Activated naive CD4-positive, alpha-beta T cell treated with anti-CD3 and anti-CD28 coated beads for 36 hours (primary cell): ENCODE measurements at regions of chr12 and their contacts with region 1.

Region 1: GRCh38 chr12:6807170-6807569 is 14.5 kb upstream of the GPR162 start:
- DNase-seq: no peak
- H3K4me3 Mint-ChIP-seq: no peak overlapping the region
- H3K27ac Mint-ChIP-seq: no peak overlapping the region
- H3K4me1 Mint-ChIP-seq: peaks cover 19% of the 10 kb centered on the region
- H3K27me3 Mint-ChIP-seq: no peaks in the 10 kb centered on the region

Region 2: DNA sequence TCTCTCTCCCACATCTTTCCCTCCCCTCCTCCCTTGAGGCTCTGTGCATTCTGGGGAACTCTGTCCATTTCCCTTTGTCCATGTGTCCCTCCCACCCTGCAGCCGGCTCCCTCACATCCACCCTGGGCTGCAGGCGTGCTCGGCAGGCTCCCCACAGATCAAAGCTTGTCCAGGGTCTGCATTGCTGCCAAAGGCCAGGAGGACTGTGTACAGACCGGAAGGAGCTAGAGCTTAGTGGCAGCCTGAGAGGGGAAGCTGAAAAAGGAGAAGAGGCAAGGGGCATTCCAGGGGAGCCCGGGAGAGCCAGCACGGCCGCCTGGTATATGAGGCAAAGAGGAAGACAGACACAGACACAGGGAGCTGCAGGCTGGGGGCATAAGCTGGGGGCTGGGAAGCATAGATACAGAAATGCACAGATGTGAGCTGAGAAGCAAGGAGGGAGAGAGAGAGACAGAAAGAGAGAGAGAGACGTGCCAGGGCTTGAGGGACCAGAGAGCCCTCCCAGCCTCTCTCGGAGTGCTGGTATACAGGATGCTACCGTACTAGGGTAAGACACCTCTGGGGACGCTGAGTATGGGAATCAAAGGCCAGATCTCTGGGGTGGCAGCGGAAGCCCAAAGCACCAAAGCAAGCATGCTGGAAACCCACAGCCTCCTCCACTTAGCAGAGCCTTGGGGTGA is 14.5 kb before region 1 on chr12:
- CTCF ChIA-PET with region 1: interaction called, 4 read pairs
- intact Hi-C with region 1: loop called (anchors 2 kb)
- DNase-seq: peak; percentile 61
- H3K4me3 Mint-ChIP-seq: peak overlapping the region; percentile 97
- H3K27ac Mint-ChIP-seq: peak overlapping the region; percentile 96
- H3K4me1 Mint-ChIP-seq: peaks cover 51% of the 10 kb centered on the region
- H3K27me3 Mint-ChIP-seq: no peaks in the 10 kb centered on the region

Region 3: DNA sequence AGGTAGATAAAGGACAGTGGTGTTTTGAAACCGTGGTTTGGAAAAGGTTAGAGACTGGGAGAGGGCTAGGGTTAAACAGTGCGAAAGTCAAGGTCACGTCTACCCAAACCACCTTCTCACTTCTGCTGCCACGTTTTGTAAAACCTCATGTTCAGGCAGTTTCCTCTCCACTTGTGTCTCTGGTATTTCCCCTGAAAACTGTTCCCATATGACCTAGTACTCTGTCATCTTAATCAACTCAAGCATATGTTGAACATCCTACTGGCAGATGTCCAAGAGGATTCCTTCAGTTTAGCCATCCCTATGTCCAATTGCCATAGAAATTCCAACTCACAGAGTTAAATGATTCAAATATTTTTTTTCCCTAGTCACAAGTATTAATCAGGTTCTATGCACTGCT is 922.6 kb after region 1 on chr12:
- CTCF ChIA-PET with region 1: no interaction called
- intact Hi-C with region 1: no loop called
- DNase-seq: no peak
- H3K4me3 Mint-ChIP-seq: no peak overlapping the region
- H3K27ac Mint-ChIP-seq: no peak overlapping the region
- H3K4me1 Mint-ChIP-seq: no peaks in the 10 kb centered on the region
- H3K27me3 Mint-ChIP-seq: no peaks in the 10 kb centered on the region